Activated CD8-positive, alpha-beta memory T cell treated with anti-CD3 and anti-CD28 coated beads, Interleukin-2, amount 10 ng/mL, durations not matched to agents 7 days and 5 days (primary cell): ENCODE measurements at regions of chr12 and their contacts with region 1.

Region 1: DNA sequence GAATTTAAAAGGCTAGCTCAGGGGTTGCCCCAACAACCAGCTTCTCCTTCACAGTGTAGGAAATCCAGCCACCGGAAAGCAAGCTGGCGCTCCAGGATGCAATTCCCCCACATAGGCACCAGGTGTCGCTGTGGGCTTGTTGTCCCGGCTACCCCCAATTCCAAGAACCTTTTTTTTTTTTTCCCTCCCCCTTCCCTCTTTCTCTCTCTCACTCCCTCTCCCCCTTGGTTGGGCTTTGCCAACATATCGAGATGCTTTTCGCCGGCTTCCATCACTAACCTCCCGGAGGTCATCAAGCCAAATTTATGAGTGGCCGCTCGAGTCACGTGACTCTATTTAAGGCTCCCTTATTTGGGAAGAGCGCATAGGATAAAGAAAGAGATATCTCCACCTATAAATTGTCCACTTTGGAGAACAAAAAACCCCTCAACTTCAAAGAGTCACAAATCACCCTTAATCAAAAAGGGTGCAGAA is at the start of gene HOXC5:
- DNase-seq: peak; percentile 77
- ATAC-seq: peak; percentile 32
- H3K4me3 Mint-ChIP-seq: peak within 1 kb of the TSS; percentile 49
- H3K27ac Mint-ChIP-seq: no peak within 1 kb of the TSS
- H3K4me1 Mint-ChIP-seq: peaks cover 22% of the 10 kb centered on the region
- H3K27me3 Mint-ChIP-seq: peaks cover 90% of the 10 kb centered on the region
- total RNA-seq, gene HOXC5: not detected

Region 2: GRCh38 chr12:53999559-54000104 is 33.0 kb before region 1 on chr12:
- CTCF ChIA-PET with region 1: interaction called, 74 read pairs
- DNase-seq: no peak
- ATAC-seq: no peak
- H3K4me3 Mint-ChIP-seq: peak overlapping the region; percentile 42
- H3K27ac Mint-ChIP-seq: no peak overlapping the region
- H3K4me1 Mint-ChIP-seq: peaks cover 14% of the 10 kb centered on the region
- H3K27me3 Mint-ChIP-seq: peaks cover 97% of the 10 kb centered on the region

Region 3: DNA sequence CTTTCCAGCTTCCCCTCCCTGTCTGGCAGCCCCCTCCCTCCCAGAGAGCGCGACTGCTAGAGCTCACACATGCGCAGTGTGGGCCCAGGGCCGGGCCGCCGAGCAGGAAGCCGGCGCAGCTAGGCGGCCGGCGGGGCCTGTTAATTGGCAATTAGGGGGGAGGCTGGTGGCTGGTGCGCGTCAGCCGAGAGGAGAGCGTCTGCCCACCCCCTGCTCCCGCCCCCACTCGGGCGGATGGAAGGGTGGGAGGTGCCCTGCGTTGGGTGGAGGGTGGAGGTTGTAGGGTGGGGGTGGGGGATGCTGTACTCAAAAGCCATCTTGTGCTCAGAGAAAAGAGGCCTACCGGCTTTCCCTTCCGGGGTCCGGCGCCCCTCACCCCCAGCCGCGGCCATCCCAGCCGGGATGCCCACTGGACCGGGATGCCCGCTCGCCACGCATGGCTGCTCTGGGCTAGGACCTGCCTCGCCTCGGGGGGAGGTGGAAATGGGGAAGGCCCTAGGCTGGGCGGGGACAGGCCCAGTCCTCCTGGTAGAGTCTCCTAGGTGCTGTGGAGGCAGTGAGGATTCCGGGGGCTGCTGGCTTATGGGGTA is 14.7 kb before region 1 on chr12:
- CTCF ChIA-PET with region 1: interaction called, 39 read pairs
- DNase-seq: peak; percentile 87
- ATAC-seq: peak; percentile 96
- H3K4me3 Mint-ChIP-seq: peak overlapping the region; percentile 74
- H3K27ac Mint-ChIP-seq: peak overlapping the region; percentile 58
- H3K4me1 Mint-ChIP-seq: peaks cover 15% of the 10 kb centered on the region
- H3K27me3 Mint-ChIP-seq: peaks cover 81% of the 10 kb centered on the region

Region 4: DNA sequence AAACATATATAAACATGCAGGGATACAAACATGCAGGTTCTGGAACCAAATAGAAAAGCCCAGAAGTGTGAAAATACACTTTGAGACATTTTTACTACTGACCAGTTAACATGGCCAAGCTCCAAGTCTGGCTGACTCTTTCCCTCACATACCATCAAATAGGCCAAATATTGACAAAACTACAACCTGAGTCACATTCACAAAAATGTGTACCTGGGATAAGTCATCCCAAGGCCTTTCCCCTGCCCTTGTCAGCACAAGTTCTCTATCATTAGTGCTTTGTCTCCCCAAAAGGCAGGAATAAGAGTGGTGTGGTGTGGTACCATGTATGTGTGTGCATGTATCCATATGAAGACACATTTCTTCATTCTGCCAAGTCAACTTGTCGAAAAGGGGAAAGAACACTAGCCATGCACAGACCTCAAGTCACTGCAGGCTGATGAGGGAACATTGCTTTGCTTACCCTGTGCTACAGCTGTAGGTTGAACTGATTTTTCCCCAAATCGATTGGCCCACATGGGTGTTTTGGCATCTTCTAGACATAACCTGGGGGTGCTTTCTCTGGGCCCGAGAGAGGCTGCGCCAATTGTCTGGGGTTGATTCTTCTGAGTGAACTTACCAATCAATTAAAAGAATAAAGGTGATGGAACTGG is 35.9 kb after region 1 on chr12:
- CTCF ChIA-PET with region 1: no interaction called
- DNase-seq: no peak
- ATAC-seq: no peak
- H3K4me3 Mint-ChIP-seq: no peak overlapping the region
- H3K27ac Mint-ChIP-seq: no peak overlapping the region
- H3K4me1 Mint-ChIP-seq: no peaks in the 10 kb centered on the region
- H3K27me3 Mint-ChIP-seq: peaks cover 58% of the 10 kb centered on the region

Region 5: DNA sequence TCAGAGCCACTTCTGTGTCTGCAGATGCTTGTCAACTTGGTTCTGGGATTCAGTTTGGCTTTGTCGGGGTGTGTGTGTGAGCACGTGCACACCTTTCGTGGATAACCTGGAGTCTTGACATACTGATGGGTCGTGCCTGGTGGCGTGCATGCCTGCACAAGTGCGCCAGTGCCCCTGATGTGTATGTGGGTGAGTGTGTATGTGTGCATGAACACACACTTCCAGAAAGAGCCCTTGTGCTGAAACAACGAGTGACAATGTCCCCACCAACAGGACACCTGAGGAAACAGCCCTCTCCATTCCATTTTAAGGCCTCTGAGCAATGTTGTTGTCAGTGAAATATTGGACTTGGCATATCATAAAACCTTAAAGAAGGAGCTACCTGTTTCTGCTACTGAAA is 102.2 kb after region 1 on chr12:
- CTCF ChIA-PET with region 1: interaction called, 13 read pairs
- DNase-seq: no peak
- ATAC-seq: no peak
- H3K4me3 Mint-ChIP-seq: no peak overlapping the region
- H3K27ac Mint-ChIP-seq: no peak overlapping the region
- H3K4me1 Mint-ChIP-seq: no peaks in the 10 kb centered on the region
- H3K27me3 Mint-ChIP-seq: peaks cover 86% of the 10 kb centered on the region

Region 6: DNA sequence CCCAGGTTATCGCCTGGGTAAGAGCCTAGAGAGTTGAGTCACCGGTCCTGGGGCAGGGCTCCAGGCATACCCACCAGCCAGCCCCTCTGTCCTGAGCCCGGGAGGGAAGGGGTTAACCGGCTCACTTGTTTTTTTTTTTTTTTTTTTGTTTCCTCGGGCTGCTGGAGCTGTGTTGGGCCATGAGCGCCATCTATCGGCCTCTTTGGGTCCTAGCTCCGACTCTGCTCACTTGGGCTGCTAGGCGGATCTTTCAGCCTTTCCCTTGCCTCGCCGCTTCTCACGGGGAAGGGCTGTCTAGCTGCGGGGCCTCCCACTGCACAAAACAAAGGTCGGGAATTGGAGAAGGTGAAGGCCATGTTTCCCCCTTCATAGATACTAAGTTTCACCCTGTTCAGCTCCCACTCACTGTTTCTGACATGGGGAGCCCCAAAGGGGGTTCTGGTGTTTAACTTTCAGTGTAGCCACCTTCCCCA is 158.9 kb after region 1 on chr12:
- CTCF ChIA-PET with region 1: interaction called, 229 read pairs
- DNase-seq: peak; percentile 82
- ATAC-seq: peak; percentile 54
- H3K4me3 Mint-ChIP-seq: no peak overlapping the region
- H3K27ac Mint-ChIP-seq: no peak overlapping the region
- H3K4me1 Mint-ChIP-seq: peaks cover 21% of the 10 kb centered on the region
- H3K27me3 Mint-ChIP-seq: peaks cover 53% of the 10 kb centered on the region

Region 7: DNA sequence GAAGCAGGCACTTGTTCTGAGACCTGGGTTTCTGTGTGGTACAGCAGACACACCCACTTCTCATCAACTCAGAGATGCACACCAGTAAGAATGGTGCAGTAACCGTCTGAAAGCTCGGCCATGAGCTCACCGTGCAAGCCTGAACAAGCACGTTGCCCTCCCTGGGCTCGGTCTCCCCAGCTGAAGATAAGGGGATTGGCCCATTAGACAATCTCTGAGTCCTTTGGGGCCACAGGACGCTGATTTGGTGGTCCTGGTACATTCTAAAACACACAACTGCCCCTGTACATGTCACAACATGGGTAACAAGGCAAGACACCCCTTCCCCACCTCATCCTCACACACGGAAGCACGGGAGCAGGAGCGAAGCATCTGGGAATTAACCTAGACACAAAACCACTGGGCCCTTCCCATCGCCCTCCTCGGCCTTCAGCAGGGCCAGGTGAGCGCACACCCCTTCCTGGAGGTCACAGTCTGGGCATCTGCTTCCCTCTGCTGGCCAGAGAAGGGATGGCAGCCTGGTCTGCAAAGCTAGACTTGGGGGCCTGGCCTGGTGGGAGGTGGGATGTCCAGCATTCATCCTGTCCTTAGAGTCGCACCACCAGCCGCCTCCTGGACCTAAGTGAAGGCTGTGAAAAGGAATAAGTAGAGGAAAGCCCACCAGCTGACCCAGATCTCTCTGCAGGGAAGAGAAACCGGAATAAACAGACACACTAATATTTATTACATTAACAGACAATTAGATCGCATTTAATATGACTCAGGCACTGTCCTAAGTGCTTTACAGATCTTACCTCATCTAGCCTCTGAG is 175.0 kb after region 1 on chr12:
- CTCF ChIA-PET with region 1: interaction called, 158 read pairs
- DNase-seq: peak; percentile 87
- ATAC-seq: peak; percentile 92
- H3K4me3 Mint-ChIP-seq: no peak overlapping the region
- H3K27ac Mint-ChIP-seq: no peak overlapping the region
- H3K4me1 Mint-ChIP-seq: peaks cover 2% of the 10 kb centered on the region
- H3K27me3 Mint-ChIP-seq: peaks cover 34% of the 10 kb centered on the region